ENCODE measurements at regions of chr1 and their contacts with region 1.

Region 1: DNA sequence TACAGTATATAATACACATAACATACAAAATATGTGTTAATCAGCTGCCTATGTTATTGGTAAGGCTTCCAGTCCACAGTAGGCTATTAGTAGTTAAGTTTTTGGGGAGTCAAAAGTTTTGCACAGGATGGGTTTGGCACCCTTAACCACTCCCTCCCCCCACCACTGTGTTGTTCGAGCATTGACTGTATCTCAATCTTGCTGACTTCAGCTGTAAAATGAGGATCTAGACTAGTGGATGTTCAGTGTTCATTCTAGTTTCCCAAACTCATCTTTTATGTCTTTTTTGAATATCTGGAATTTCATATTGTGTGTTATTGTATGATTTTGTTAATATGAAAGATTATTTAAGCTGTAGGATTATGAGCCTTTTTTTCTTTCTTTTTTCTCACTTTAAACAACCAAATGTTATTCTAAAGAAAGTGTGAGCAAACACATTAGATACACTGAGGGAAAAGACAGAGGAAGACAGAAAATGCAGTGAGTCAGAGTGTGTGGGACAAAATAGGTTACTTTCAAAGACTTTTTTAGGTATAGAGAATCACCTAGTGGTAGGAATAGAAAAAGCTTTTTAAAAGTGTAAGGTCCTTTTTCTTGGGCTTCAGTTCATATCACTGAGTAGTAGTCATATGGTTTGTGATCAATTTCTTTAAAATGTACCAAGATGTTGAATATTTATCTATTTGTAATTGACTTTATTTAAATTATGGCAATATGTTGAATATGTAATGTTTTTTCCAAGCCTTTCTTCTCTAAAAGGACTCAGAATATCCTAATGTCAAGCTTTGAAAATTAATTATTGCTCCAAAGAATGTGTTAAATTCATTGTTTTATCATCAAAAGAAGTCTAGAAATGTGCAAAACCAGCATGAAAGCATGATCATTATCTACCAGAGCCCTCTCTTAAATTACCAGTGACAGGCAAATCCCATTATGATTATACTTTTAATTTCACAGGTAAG is 17.9 kb upstream of the CENPF start:
- DNase-seq: peak; percentile 29

Region 2: GRCh38 chr1:214328770-214329469 is 256.2 kb before region 1 on chr1:
- in situ Hi-C with region 1: loop called (anchors 25 kb)
- DNase-seq: peak; percentile 90

Region 3: GRCh38 chr1:214439352-214440119 is 145.6 kb before region 1 on chr1:
- in situ Hi-C with region 1: loop called (anchors 5 kb)
- DNase-seq: no peak

Measured in G401 (cell line).